ENCODE measurements at regions of chr16 and their contacts with region 1.

Region 1: DNA sequence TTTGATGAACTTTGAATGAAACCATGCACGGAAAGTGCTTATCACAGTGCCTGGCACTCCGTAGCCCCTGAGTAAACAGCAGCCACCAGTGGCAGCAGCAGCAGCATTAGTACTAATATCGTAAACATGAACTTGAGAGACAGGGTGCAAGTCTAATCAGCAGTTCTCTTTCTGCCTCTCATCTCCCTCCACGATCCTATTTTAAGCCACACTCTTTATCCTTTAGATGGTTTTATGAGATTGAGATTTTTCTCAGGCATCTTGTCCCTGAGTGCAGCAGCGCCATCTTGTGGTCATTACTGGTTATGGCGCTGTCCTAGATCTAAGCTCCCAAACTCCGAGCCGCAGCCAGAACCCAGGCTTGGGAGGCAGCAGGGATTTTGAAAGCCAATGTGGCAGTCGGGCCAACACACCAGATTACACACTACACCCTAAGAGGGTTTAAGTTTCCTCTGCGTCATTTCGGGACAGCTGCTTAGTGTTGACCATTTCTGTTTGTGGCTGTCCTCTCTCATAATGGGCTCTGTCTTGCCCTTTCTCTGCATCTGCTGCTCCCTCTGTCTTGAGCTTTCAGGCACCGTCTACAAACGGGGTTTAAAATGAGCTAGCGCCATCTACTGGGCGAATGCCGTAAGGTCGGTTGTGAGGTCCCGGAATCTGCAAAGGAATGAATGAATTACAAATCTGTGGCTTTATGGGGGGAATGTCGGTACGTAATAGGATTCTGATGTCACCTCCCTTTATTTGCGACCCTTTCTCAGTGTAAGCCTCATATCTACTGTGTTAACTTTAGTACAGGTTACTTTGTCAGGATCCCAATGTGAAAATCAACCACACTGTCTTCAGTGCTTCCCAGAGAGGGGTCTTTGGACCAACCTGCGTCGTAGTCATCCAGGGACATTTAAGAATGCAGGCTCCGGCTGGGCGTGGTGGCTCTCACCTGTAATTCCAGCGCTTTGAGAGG is 64.5 kb downstream of the CYLD start:
- DNase-seq: peak; percentile 91
- ATAC-seq: peak; percentile 92
- H3K4me3 Mint-ChIP-seq: peak overlapping the region; percentile 66
- H3K27ac Mint-ChIP-seq: peak overlapping the region; percentile 70
- H3K4me1 Mint-ChIP-seq: peaks cover 13% of the 10 kb centered on the region
- H3K27me3 Mint-ChIP-seq: no peaks in the 10 kb centered on the region
- CTCF ChIP-seq: peak; percentile 98

Region 2: GRCh38 chr16:50354629-50355456 is 451.5 kb before region 1 on chr16:
- CTCF ChIA-PET with region 1: interaction called, 11 read pairs
- POLR2A ChIA-PET with region 1: no interaction called
- intact Hi-C with region 1: no loop called
- DNase-seq: no peak
- ATAC-seq: no peak
- H3K4me3 Mint-ChIP-seq: no peak overlapping the region
- H3K27ac Mint-ChIP-seq: peak overlapping the region; percentile 13
- H3K4me1 Mint-ChIP-seq: peaks cover 23% of the 10 kb centered on the region
- H3K27me3 Mint-ChIP-seq: no peaks in the 10 kb centered on the region
- CTCF ChIP-seq: peak; percentile 92

Region 3: GRCh38 chr16:50635505-50636392 is 170.6 kb before region 1 on chr16:
- CTCF ChIA-PET with region 1: interaction called, 10 read pairs
- POLR2A ChIA-PET with region 1: no interaction called
- intact Hi-C with region 1: no loop called
- DNase-seq: peak; percentile 60
- ATAC-seq: peak; percentile 79
- H3K4me3 Mint-ChIP-seq: no peak overlapping the region
- H3K27ac Mint-ChIP-seq: no peak overlapping the region
- H3K4me1 Mint-ChIP-seq: peaks cover 2% of the 10 kb centered on the region
- H3K27me3 Mint-ChIP-seq: no peaks in the 10 kb centered on the region
- CTCF ChIP-seq: no peak

Region 4: DNA sequence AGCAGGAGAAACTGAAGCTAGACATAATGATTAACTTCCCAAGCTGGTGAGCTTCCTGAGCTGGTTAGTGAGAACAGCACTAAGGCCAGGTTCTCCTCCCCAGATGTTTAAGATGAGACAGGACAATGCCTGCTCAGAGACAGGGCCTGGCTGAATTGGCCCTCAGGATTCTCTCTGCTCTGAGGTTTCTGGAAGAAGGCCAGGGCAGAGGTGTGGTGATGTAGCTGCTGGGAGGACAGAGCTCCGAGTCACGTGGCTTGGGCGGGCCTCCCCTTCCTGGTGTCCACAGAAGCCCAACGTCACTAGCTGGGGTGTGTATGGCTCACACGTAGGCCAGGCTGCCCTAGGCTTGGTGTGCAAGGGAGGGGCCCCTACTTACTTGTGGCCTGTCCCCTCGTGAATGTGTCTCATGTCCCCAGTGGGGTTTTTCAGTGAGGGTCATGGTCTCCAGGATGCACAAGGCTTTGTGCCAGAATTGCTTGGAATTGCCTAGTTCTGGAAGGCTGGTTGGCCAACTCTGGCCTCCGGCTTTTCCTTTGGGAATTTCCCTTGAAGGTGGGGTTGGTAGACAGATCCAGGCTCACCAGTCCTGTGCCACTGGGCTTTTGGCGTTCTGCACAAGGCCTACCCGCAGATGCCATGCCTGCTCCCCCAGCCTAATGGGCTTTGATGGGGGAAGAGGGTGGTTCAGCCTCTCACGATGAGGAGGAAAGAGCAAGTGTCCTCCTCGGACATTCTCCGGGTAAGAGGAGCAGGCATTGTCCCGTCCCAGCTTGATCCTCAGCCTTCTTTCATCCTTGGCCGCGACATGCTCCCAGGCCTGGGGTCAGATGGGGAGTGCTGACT is 109.6 kb before region 1 on chr16:
- CTCF ChIA-PET with region 1: interaction called, 11 read pairs
- POLR2A ChIA-PET with region 1: no interaction called
- intact Hi-C with region 1: no loop called
- DNase-seq: peak; percentile 63
- ATAC-seq: peak; percentile 35
- H3K4me3 Mint-ChIP-seq: no peak overlapping the region
- H3K27ac Mint-ChIP-seq: peak overlapping the region; percentile 90
- H3K4me1 Mint-ChIP-seq: peaks cover 69% of the 10 kb centered on the region
- H3K27me3 Mint-ChIP-seq: peaks cover 8% of the 10 kb centered on the region
- CTCF ChIP-seq: no peak

Region 5: GRCh38 chr16:50747207-50747956 is 59.0 kb before region 1 on chr16:
- CTCF ChIA-PET with region 1: interaction called, 78 read pairs
- POLR2A ChIA-PET with region 1: interaction called, 4 read pairs
- intact Hi-C with region 1: loop called (anchors 5 kb)
- DNase-seq: peak; percentile 25
- ATAC-seq: peak; percentile 66
- H3K4me3 Mint-ChIP-seq: peak overlapping the region; percentile 69
- H3K27ac Mint-ChIP-seq: peak overlapping the region; percentile 98
- H3K4me1 Mint-ChIP-seq: peaks cover 61% of the 10 kb centered on the region
- H3K27me3 Mint-ChIP-seq: no peaks in the 10 kb centered on the region
- CTCF ChIP-seq: peak; percentile 79

Region 6: DNA sequence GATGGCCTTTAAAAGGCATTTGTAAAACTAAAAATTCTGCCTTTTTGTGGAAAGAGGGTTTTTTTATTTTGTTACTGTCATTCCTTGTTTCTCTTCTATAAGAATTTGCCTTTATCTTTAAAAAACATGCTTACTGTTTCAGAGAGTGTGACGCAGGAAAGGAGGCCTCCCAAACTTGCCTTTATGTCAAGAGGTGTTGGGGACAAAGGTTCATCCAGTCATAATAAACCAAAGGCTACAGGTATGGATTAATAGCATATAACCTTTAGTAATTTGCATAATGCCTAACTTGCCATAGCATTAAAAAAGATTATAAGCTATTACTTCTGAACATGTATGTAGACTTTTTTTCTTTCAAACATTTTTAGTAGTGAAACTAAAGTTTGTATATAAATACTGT is 30.3 kb before region 1 on chr16:
- CTCF ChIA-PET with region 1: interaction called, 15 read pairs
- POLR2A ChIA-PET with region 1: no interaction called
- intact Hi-C with region 1: no loop called
- DNase-seq: no peak
- ATAC-seq: no peak
- H3K4me3 Mint-ChIP-seq: no peak overlapping the region
- H3K27ac Mint-ChIP-seq: no peak overlapping the region
- H3K4me1 Mint-ChIP-seq: peaks cover 64% of the 10 kb centered on the region
- H3K27me3 Mint-ChIP-seq: no peaks in the 10 kb centered on the region
- CTCF ChIP-seq: no peak

Region 7: DNA sequence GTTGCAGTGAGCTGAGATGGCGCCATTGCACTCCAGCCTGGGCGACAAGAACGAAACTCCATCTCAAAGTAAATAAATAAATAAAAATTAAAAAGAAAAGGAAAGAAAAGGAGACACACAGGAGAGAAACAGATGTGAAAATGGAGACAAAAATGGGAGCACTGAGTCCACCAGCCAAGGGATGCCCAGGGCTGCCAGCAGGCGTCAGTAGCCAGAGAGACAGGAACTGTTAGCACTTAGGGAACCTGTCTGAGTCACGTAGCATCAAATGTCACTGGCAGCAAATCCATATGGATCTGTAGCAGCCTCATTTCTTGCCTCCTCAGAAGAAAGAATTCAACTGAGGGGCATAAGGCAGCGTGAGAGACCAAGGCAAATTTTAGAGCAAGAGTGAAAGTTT is 15.2 kb after region 1 on chr16:
- CTCF ChIA-PET with region 1: interaction called, 27 read pairs
- POLR2A ChIA-PET with region 1: no interaction called
- intact Hi-C with region 1: no loop called
- DNase-seq: no peak
- ATAC-seq: no peak
- H3K4me3 Mint-ChIP-seq: no peak overlapping the region
- H3K27ac Mint-ChIP-seq: no peak overlapping the region
- H3K4me1 Mint-ChIP-seq: no peaks in the 10 kb centered on the region
- H3K27me3 Mint-ChIP-seq: peaks cover 4% of the 10 kb centered on the region
- CTCF ChIP-seq: no peak